ENCODE measurements at regions of chr1 and their contacts with region 1.

Region 1: DNA sequence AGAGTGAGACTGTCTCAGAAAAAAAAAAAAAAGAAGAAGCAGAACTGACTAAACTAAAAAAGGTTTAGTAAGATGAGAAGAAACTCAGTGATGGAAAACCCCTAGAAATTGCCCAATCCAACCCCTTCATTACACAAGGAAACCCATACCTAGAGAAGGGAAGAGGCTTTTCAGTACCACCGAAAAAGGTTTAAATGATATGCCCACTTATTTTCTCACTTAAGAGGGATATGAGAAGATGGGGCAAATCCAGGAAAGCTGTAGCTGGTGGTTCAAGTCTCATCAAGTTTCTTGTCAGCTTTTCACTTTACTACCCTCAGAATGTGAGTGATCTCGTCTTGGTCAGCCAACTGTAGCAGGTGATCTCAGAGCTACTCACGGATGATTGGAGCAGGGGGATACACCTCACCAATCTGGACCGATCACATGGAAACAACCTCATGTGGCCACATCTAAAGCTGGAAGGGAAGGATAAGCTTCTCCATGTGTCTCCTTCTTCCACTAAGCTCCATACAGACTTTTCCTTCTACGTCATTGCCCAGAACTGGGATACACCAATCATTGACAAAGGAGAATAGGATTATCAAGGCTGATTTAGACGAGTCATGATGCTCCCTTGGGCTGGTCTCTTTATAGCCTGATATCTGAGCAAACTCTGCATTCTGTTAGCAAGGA is 126.7 kb upstream of the POU3F1 start:
- DNase-seq: no peak
- H3K4me3 ChIP-seq: no peak overlapping the region
- H3K27ac ChIP-seq: no peak overlapping the region
- H3K4me1 ChIP-seq: no peaks in the 10 kb centered on the region
- H3K27me3 ChIP-seq: no peaks in the 10 kb centered on the region
- CTCF ChIP-seq: no peak
- EP300 ChIP-seq: no peak
- POLR2A ChIP-seq: no peak

Region 2: DNA sequence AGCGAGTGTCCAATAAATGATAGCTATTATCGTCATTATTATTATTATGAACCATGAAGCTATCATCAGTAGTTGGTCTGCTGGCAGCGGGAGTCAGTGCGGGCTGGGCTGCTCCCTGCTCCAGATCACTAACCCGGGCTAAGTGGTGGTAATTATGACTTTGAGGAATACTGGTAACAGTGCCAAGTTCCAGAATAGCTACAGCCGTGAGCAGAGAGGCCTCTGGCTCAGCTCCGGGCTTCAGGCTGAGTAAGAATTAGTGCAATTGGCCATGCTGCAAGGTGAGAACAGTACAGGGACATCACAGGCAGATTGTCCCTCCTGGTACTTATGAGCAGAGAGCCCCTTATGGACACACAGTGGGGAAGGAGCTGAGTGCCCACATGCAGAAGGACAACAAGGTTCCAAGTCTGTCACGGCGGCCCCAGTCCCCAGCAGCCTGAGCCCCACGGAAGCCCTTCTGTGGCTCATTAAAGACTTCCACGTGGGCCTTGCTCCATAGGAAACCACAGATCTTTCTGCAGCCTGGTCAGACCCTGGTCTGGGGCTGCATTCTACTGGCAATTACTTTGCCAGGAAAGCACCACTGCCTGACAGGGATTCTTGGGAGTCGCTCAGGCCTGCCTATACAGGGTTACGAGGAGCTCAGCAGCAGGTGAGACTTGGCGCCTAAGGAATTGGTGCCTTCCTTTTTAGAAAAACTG is 451.2 kb after region 1 on chr1:
- intact Hi-C with region 1: loop called in 1 of 4 experiments (anchors 10 kb)
- DNase-seq: no peak
- H3K4me3 ChIP-seq: no peak overlapping the region
- H3K27ac ChIP-seq: no peak overlapping the region
- H3K4me1 ChIP-seq: no peaks in the 10 kb centered on the region
- H3K27me3 ChIP-seq: no peaks in the 10 kb centered on the region
- CTCF ChIP-seq: no peak
- EP300 ChIP-seq: no peak
- POLR2A ChIP-seq: no peak